ENCODE measurements at regions of chr21 and their contacts with region 1.

Region 1: DNA sequence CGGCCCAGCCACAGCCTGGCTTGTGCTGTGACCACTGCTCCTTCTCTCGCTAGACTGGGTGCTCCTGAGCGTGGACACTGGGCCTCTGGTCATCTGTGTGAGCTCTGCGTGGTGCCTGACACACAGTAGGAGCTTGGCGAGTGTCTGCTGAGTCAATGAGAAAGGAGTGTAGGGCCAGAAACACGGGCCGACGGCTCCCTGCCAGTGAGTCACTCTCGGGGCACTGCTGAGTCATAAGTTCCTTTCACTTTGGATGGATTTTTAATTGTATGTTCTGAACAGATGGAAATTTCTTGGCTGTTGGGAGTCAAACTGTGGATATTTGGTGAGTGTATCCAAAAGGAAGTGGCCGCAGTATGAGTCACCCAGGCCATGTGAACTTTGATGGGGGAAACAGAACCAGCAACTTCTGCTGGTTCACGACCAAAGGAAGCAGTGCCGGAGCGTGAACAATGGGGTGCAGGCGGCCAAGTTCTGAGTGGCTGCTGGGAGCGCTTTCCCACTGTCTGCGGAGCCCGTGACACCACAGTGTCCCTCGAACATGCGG is 41.0 kb upstream of the COL18A1 start:
- DNase-seq: peak; percentile 32
- H3K4me3 Mint-ChIP-seq: peak overlapping the region; percentile 8
- H3K27ac Mint-ChIP-seq: peak overlapping the region; percentile 42
- H3K4me1 Mint-ChIP-seq: peaks cover 7% of the 10 kb centered on the region
- H3K27me3 Mint-ChIP-seq: peaks cover 2% of the 10 kb centered on the region

Region 2: GRCh38 chr21:45404730-45405270 is 40.8 kb after region 1 on chr21 and contains the start of gene COL18A1:
- intact Hi-C with region 1: loop called (anchors 2 kb)
- DNase-seq: peak; percentile 20
- H3K4me3 Mint-ChIP-seq: peak within 1 kb of the TSS; percentile 62
- H3K27ac Mint-ChIP-seq: peak within 1 kb of the TSS; percentile 68
- H3K4me1 Mint-ChIP-seq: peaks cover 4% of the 10 kb centered on the region
- H3K27me3 Mint-ChIP-seq: peaks cover 47% of the 10 kb centered on the region
- total RNA-seq, gene COL18A1: 2.1 and 3.4 TPM in 2 replicates

Region 3: DNA sequence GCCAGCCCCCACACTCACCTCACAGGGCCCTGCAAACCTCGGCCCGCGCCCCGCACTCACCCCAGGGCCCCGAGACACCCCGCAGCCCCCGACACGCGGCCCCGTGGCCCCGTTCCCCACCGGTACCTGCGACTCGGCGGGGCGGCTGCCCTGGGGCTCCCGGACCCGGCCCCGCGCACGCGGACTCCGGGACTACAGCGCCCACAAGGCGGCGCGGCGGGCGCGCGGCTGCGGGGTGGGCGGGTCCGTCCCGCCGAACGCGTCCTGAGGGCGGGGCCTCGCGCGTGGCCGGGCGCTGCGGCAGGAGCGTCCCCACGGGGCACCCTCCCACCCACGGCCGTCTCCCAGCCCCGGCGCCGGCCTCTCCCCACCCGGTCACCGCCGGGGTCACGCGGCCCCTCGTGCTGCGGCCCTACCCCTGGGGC is 178.3 kb after region 1 on chr21 and contains the start of gene SLC19A1:
- intact Hi-C with region 1: no loop called
- DNase-seq: peak; percentile 78
- H3K4me3 Mint-ChIP-seq: peak within 1 kb of the TSS; percentile 89
- H3K27ac Mint-ChIP-seq: peak within 1 kb of the TSS; percentile 68
- H3K4me1 Mint-ChIP-seq: peaks cover 14% of the 10 kb centered on the region
- H3K27me3 Mint-ChIP-seq: no peaks in the 10 kb centered on the region
- total RNA-seq, gene SLC19A1: 104 and 105 TPM in 2 replicates